CD8-positive, alpha-beta T cell (primary cell): ENCODE measurements at regions of chr13 and their contacts with region 1.

Region 1: DNA sequence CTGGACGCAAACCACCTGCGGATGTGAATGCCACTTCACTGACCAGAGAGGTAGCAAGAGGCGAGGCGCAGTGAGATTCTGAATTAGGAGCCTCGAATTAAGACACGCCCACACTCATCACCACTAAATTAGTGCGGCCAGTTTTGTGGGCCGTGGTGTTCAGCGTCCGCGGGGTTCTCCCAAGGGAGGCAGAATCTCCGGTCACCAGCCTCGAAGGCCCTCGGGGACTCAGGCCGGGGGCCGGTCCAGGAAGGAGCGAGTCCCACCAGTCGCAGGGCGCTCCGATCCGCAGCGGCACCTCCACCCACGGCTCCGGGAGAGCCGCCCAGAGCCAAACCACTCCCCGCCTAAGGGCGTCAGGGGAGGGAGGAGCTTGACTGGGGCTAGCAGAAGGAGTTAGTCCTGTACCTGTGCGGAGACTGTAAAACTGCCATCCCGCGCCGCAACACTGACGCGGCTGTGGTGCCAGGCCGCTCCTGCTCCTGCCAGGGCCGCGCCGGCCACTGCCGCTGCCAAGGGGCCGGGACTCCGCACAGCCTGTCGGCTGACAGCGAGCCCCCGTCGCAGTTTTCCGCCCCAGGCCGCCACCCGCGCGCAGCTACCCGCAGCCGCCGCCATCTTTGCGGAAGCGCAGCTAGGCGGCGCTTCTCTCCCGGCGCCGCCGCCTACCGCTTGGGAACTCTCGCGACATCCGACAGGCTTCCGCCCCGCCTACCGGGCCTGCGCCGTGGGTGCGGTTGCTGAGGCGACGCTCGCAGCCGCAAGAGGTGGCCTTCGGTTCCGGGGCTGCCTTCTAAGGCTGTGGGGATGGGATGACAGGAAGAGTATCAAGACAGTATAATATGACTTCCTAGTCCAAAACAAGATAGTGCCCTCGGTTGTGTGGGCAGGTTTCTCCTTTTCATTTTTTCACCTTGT is at the start of gene MICU2:
- DNase-seq: peak; percentile 91 to 98 (median 96)
- ATAC-seq: peak; percentile 92
- H3K4me3 ChIP-seq: peak within 1 kb of the TSS; percentile 73 to 85
- H3K4me3 Mint-ChIP-seq: peak within 1 kb of the TSS; percentile 84
- H3K27ac ChIP-seq: peak within 1 kb of the TSS; percentile 84 to 97
- H3K27ac Mint-ChIP-seq: peak within 1 kb of the TSS; percentile 94
- H3K4me1 ChIP-seq: peaks cover 24% of the 10 kb centered on the region
- H3K4me1 Mint-ChIP-seq: peaks cover 47% of the 10 kb centered on the region
- H3K27me3 ChIP-seq: no peaks in the 10 kb centered on the region
- H3K27me3 Mint-ChIP-seq: peaks cover 9% of the 10 kb centered on the region
- CTCF ChIP-seq: no peak
- total RNA-seq, gene MICU2: 28.3 to 36.0 TPM

Region 2: GRCh38 chr13:19782049-19782726 is 1821.6 kb before region 1 on chr13:
- CTCF ChIA-PET with region 1: no interaction called
- POLR2A ChIA-PET with region 1: no interaction called
- intact Hi-C with region 1: loop called in 1 of 2 experiments (anchors 5 kb)
- DNase-seq: peak; percentile 22 to 73 (median 55)
- ATAC-seq: peak; percentile 54
- H3K4me3 ChIP-seq: peak overlapping the region; percentile 94 to 95
- H3K4me3 Mint-ChIP-seq: peak overlapping the region; percentile 99
- H3K27ac ChIP-seq: peak overlapping the region; percentile 89 to 94
- H3K27ac Mint-ChIP-seq: peak overlapping the region; percentile 99
- H3K4me1 ChIP-seq: no peaks in the 10 kb centered on the region
- H3K4me1 Mint-ChIP-seq: peaks cover 6% of the 10 kb centered on the region
- H3K27me3 ChIP-seq: no peaks in the 10 kb centered on the region
- H3K27me3 Mint-ChIP-seq: no peaks in the 10 kb centered on the region
- CTCF ChIP-seq: no peak

Region 3: GRCh38 chr13:20024702-20025101 is 1579.1 kb before region 1 on chr13:
- CTCF ChIA-PET with region 1: no interaction called
- POLR2A ChIA-PET with region 1: no interaction called
- intact Hi-C with region 1: no loop called
- DNase-seq: no peak
- ATAC-seq: no peak
- H3K4me3 ChIP-seq: no peak overlapping the region
- H3K4me3 Mint-ChIP-seq: no peak overlapping the region
- H3K27ac ChIP-seq: no peak overlapping the region
- H3K27ac Mint-ChIP-seq: no peak overlapping the region
- H3K4me1 ChIP-seq: no peaks in the 10 kb centered on the region
- H3K4me1 Mint-ChIP-seq: peaks cover 13% of the 10 kb centered on the region
- H3K27me3 ChIP-seq: no peaks in the 10 kb centered on the region
- H3K27me3 Mint-ChIP-seq: no peaks in the 10 kb centered on the region
- CTCF ChIP-seq: no peak

Region 4: GRCh38 chr13:20566898-20567874 is 1036.6 kb before region 1 on chr13 and contains the start of gene IFT88:
- CTCF ChIA-PET with region 1: no interaction called
- POLR2A ChIA-PET with region 1: no interaction called
- intact Hi-C with region 1: loop called in 1 of 2 experiments (anchors 5 kb)
- DNase-seq: peak; percentile 49 to 90 (median 80)
- ATAC-seq: peak; percentile 86
- H3K4me3 ChIP-seq: peak within 1 kb of the TSS; percentile 70 to 71
- H3K4me3 Mint-ChIP-seq: peak within 1 kb of the TSS; percentile 87
- H3K27ac ChIP-seq: peak within 1 kb of the TSS; percentile 70 to 77
- H3K27ac Mint-ChIP-seq: peak within 1 kb of the TSS; percentile 89
- H3K4me1 ChIP-seq: no peaks in the 10 kb centered on the region
- H3K4me1 Mint-ChIP-seq: peaks cover 17% of the 10 kb centered on the region
- H3K27me3 ChIP-seq: no peaks in the 10 kb centered on the region
- H3K27me3 Mint-ChIP-seq: no peaks in the 10 kb centered on the region
- CTCF ChIP-seq: no peak
- total RNA-seq, gene IFT88: 7.5 to 8.2 TPM

Region 5: GRCh38 chr13:21176220-21176982 is 427.4 kb before region 1 on chr13 and contains the starts of genes MRPL57 and SKA3:
- CTCF ChIA-PET with region 1: no interaction called
- POLR2A ChIA-PET with region 1: interaction called, 11 read pairs
- intact Hi-C with region 1: loop called (anchors 1 to 2 kb)
- DNase-seq: peak; percentile 86 to 97 (median 93)
- ATAC-seq: peak; percentile 97
- H3K4me3 ChIP-seq: peak within 1 kb of the TSS; percentile 83 to 93
- H3K4me3 Mint-ChIP-seq: peak within 1 kb of the TSS; percentile 97
- H3K27ac ChIP-seq: peak within 1 kb of the TSS; percentile 80 to 92
- H3K27ac Mint-ChIP-seq: peak within 1 kb of the TSS; percentile 96
- H3K4me1 ChIP-seq: peaks cover 18% of the 10 kb centered on the region
- H3K4me1 Mint-ChIP-seq: peaks cover 26% of the 10 kb centered on the region
- H3K27me3 ChIP-seq: no peaks in the 10 kb centered on the region
- H3K27me3 Mint-ChIP-seq: no peaks in the 10 kb centered on the region
- CTCF ChIP-seq: no peak
- total RNA-seq, gene MRPL57: 9.8 to 11.1 TPM
- total RNA-seq, gene SKA3: 0.36 to 0.49 TPM

Region 6: GRCh38 chr13:21458813-21459701 is 144.7 kb before region 1 on chr13 and contains the start of gene ZDHHC20:
- CTCF ChIA-PET with region 1: no interaction called
- POLR2A ChIA-PET with region 1: interaction called, 7 read pairs
- intact Hi-C with region 1: loop called in 1 of 2 experiments (anchors 2 kb)
- DNase-seq: peak; percentile 77 to 96 (median 90)
- ATAC-seq: peak; percentile 93
- H3K4me3 ChIP-seq: peak within 1 kb of the TSS; percentile 69 to 78
- H3K4me3 Mint-ChIP-seq: peak within 1 kb of the TSS; percentile 95
- H3K27ac ChIP-seq: peak within 1 kb of the TSS; percentile 80 to 89
- H3K27ac Mint-ChIP-seq: peak within 1 kb of the TSS; percentile 96
- H3K4me1 ChIP-seq: peaks cover 15% of the 10 kb centered on the region
- H3K4me1 Mint-ChIP-seq: peaks cover 45% of the 10 kb centered on the region
- H3K27me3 ChIP-seq: no peaks in the 10 kb centered on the region
- H3K27me3 Mint-ChIP-seq: no peaks in the 10 kb centered on the region
- CTCF ChIP-seq: no peak
- total RNA-seq, gene ZDHHC20: 81.0 to 81.1 TPM

Region 7: GRCh38 chr13:21579754-21580316 is 24.0 kb before region 1 on chr13:
- CTCF ChIA-PET with region 1: interaction called, 5 read pairs
- POLR2A ChIA-PET with region 1: interaction called, 9 read pairs
- intact Hi-C with region 1: loop called in 1 of 2 experiments (anchors 1 kb)
- DNase-seq: peak in 2 of 9 experiments; percentile 51 to 73
- ATAC-seq: peak; percentile 79
- H3K4me3 ChIP-seq: no peak overlapping the region
- H3K4me3 Mint-ChIP-seq: peak overlapping the region; percentile 30
- H3K27ac ChIP-seq: peak overlapping the region in 1 of 2 experiments; percentile 59
- H3K27ac Mint-ChIP-seq: peak overlapping the region; percentile 23
- H3K4me1 ChIP-seq: peaks cover 20% of the 10 kb centered on the region
- H3K4me1 Mint-ChIP-seq: peaks cover 48% of the 10 kb centered on the region
- H3K27me3 ChIP-seq: no peaks in the 10 kb centered on the region
- H3K27me3 Mint-ChIP-seq: no peaks in the 10 kb centered on the region
- CTCF ChIP-seq: no peak

Region 8: GRCh38 chr13:21929400-21929799 is 325.6 kb after region 1 on chr13:
- CTCF ChIA-PET with region 1: no interaction called
- POLR2A ChIA-PET with region 1: no interaction called
- intact Hi-C with region 1: no loop called
- DNase-seq: no peak
- ATAC-seq: no peak
- H3K4me3 ChIP-seq: no peak overlapping the region
- H3K4me3 Mint-ChIP-seq: no peak overlapping the region
- H3K27ac ChIP-seq: no peak overlapping the region
- H3K27ac Mint-ChIP-seq: no peak overlapping the region
- H3K4me1 ChIP-seq: no peaks in the 10 kb centered on the region
- H3K4me1 Mint-ChIP-seq: no peaks in the 10 kb centered on the region
- H3K27me3 ChIP-seq: no peaks in the 10 kb centered on the region
- H3K27me3 Mint-ChIP-seq: no peaks in the 10 kb centered on the region
- CTCF ChIP-seq: no peak